A549 (cell line): ENCODE measurements at regions of chr2 and their contacts with region 1.

Region 1: DNA sequence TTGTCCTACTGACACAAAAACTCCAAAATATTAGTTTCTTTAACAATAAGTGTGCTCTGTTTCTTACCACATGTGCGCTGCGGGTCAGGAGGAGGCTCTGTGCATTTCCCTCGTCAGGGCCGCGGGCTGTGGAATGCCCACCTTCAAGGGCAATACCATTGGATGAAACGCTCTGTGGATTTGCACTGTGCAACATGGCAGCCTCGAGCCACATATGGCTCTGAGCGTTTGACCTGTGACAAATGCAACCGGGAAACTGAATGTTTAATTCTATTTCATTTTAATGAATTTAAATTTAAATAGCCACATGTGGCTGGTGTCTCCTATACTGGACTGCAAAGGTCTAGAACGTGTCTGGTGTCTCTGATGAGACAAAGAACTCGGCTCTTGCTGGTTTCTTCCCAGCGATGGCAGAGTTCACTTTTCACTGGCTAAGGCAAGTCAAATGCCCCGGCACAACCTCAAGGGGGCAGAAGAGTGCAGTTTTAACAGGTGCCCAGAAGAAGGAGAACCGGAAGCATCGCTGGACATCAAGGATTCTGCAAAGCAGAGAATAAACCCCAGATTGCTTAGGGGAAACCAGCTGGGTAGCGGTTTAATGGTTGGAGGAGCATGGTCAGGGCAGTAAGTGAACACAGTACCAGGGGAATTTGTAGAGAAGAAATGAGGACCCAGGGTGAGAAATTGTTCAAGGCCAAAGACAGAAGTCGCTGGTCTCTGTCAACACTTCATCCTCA is 37.0 kb upstream of the TMEM18 start:
- DNase-seq: peak; percentile 52 to 74
- ATAC-seq: peak; percentile 78 to 94
- H3K4me3 ChIP-seq: no peak overlapping the region
- H3K27ac ChIP-seq: no peak overlapping the region
- H3K4me1 ChIP-seq: no peaks in the 10 kb centered on the region
- CTCF ChIP-seq: peak; percentile 66
- EP300 ChIP-seq: no peak
- POLR2A ChIP-seq: no peak
- RAD21 ChIP-seq: peak; percentile 74 to 79

Region 2: GRCh38 chr2:735670-736582 is 21.8 kb after region 1 on chr2:
- CTCF ChIA-PET with region 1: interaction called, 38 read pairs
- POLR2A ChIA-PET with region 1: interaction called, 5 read pairs
- DNase-seq: no peak
- ATAC-seq: no peak
- H3K4me3 ChIP-seq: no peak overlapping the region
- H3K27ac ChIP-seq: no peak overlapping the region
- H3K4me1 ChIP-seq: peaks cover 3% of the 10 kb centered on the region; the same call in 1 of the 3 replicates
- CTCF ChIP-seq: no peak
- EP300 ChIP-seq: no peak
- POLR2A ChIP-seq: no peak
- RAD21 ChIP-seq: no peak